BJ (cell line): ENCODE measurements at regions of chr1 and their contacts with region 1.

Region 1: GRCh38 chr1:203340112-203340804 is 10.7 kb downstream of the FMOD start:
- DNase-seq: no peak
- H3K4me3 ChIP-seq: no peak overlapping the region
- H3K27me3 ChIP-seq: peaks cover 19% of the 10 kb centered on the region
- CTCF ChIP-seq: peak; percentile 91

Region 2: DNA sequence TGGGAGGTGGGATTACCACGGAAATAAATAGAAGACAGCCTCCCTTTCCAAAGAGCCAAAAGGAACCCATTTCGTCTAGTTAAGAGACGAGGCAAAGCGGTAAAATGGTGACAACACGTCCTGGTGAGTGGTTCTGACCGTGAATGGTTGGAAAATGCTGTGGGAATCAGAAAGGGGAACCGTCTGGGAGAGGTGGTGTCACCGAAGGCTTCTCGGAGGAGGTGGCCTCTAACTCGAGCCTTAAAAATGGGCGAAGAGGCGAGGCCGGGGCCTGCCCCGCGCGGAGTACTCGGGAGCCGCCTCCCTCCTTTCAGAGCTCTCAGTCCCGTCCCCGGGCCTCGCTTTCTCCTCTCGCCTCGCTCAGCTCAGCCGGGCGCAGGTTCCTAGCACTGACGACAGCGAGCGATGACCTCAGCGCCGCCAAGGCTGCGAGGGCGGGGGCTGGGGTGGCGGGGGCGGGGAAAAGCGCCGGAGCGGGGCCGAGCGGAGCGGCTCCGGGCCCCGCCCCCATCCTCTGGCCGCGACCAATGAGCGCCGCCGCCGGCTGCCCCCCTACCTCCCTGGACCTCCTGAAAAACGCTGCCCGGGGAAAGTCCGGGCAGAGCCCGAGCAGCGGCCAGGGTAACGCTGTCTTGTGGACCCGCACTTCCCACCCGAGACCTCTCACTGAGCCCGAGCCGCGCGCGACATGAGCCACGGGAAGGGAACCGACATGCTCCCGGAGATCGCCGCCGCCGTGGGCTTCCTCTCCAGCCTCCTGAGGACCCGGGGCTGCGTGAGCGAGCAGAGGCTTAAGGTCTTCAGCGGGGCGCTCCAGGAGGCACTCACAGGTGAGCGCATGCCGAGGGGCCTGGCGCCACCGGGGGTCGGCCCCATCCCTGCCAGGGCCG is 35.1 kb before region 1 on chr1 and contains the start of gene BTG2:
- CTCF ChIA-PET with region 1: interaction called, 11 read pairs
- POLR2A ChIA-PET with region 1: no interaction called
- DNase-seq: peak; percentile 31
- H3K4me3 ChIP-seq: peak within 1 kb of the TSS; percentile 93
- H3K27me3 ChIP-seq: no peaks in the 10 kb centered on the region; the same call in 1 of the 2 replicates
- CTCF ChIP-seq: no peak
- polyA plus RNA-seq, gene BTG2: 22.8 and 23.7 TPM in 2 replicates

Region 3: GRCh38 chr1:203361945-203362719 is 21.9 kb after region 1 on chr1:
- CTCF ChIA-PET with region 1: interaction called, 132 read pairs
- POLR2A ChIA-PET with region 1: no interaction called
- DNase-seq: no peak
- H3K4me3 ChIP-seq: no peak overlapping the region
- H3K27me3 ChIP-seq: peaks cover 15% of the 10 kb centered on the region
- CTCF ChIP-seq: no peak

Region 4: DNA sequence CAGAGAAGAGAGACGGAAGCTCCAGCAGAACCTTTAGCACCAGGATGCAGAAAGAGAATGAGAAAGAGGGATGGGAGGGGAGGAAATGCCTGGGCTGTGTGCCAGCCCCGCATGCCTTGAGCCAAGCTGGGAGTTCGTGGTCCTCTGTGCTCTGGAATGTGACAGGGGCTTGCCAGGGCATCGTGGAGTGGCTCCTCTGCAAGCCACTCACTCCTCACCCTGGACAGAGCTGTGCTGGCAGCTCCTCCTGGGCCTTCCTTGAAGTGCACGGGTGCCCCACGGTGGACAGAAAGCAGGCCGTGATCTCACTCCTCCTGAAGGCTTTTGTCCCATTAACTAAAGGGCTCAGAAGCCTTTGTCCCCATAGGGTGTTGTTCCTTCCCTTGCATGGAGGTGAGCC is 100.5 kb after region 1 on chr1:
- CTCF ChIA-PET with region 1: interaction called, 185 read pairs
- POLR2A ChIA-PET with region 1: no interaction called
- DNase-seq: no peak
- H3K4me3 ChIP-seq: no peak overlapping the region
- H3K27me3 ChIP-seq: no peaks in the 10 kb centered on the region
- CTCF ChIP-seq: peak; percentile 68

Region 5: DNA sequence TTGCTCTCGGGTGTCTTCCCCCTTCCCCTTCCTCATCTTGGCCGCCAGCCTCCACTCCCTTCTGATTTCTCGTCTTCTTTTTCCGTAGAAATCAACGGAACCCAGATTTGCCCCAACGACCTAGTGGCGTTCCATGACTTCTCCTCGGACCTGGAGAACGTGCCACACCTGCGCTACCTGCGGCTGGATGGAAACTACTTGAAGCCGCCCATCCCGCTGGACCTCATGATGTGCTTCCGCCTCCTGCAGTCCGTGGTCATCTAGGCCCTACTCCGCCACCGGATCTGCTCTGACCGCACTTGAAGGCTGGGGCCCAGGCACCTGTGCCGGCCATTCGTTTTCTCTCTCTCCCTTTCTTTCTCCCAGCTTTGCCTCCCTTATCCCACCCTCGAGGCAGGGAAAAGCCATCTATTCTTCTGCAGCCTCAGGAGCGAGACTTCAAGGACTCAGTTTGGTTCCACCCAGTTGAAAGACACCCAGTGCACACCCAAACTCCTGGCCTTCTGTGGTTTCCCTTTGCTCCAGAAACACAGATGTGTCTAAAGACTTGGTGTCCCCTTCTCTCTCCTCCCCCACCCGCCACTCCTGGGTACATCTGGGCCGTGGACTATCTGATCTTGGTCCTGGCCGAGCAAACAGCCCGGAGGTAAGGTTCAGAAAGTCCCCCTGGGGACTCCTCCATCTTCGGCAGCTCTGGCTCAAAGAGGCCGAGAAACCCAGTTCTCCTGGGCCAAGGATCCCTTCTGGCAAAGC is 146.5 kb after region 1 on chr1:
- CTCF ChIA-PET with region 1: interaction called, 203 read pairs
- POLR2A ChIA-PET with region 1: interaction called, 5 read pairs
- DNase-seq: no peak
- H3K4me3 ChIP-seq: no peak overlapping the region
- H3K27me3 ChIP-seq: no peaks in the 10 kb centered on the region
- CTCF ChIP-seq: no peak